Posterior cingulate gyrus (tissue), 11 donors: ENCODE measurements at regions of chr20 and their contacts with region 1.

Region 1: DNA sequence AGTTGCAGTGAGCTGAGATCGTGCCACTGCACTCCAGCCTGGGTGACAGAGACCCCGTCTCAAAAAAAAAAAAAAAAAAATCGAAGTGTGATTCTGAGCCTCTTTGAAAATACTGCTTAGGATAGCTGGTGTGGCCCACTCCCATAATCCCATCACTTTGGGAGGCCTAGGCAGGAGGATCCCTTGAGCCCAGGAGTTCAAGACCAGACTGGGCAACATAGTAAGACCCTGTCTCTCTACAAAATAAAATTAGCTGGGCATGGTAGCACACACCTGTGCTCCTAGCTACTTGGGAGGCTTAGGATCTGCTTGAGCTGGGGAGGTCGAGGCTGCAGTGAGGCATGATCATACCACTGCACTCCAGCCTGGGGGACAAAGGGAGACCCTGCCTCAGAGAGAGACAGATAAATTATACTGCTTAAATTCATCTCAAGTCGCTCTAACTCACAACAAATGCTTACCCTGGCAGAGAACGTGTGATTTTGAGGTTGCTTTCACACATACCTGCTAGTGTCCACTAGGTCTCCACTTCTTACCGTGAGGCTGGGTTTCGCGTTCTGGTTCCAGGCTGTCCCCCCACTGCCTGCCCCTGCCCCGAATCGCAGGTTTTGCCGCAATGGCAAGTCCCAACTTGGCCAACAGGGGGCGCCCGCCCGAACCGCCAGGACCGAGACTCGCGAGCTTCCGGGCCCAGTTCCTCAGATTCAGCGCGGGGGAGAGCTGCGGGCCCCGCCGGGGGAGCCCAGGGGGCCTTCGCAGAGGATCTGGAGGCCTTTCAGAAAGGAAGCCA is 12.3 kb upstream of the TMC2 start:
- DNase-seq: peak; percentile 82 to 98 (median 93)

Region 2: DNA sequence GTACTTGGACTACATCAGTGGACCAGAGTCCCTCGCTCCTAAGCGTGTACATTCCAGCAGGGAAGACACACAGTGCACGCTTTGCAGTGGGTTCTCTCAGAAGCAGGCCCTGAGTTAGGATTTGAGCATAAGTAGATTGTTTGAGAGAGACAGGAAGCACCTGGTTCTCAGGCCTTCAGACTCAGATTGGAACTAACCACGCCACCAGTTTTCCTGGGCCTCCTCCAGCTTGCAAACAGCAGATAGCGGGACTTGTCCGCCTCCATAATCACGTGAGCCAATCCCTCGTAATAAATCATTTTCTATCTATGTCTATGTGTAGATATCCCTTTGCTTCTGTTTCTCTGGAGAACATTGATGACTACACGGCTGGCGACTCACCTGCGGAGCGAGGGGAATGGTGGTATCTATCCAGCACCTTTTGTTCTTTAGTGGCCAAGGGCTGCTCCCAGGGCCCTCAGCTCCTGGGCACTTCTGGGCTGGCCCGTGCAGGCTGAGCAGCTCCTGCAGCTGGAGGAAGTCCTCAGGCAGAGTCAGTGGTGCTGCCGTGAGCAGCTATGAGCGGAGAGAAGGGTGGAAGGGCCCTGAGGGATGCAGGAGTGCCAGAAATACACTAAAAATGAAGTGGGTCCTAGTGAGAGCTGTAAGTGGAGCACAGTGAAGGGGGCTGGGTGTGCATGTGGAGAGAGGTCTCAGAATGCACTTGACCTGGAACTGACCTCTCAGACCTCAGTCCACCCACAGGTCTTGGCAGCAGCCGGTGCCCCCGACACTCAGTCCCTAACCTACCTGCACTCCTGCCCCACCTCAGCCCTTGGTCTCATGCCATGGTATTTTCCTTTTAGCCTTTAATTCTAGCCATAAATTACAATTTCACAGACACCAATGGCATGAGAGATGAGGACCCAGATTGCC is 345.5 kb before region 1 on chr20:
- intact Hi-C with region 1: no loop called
- DNase-seq: no peak

Region 3: DNA sequence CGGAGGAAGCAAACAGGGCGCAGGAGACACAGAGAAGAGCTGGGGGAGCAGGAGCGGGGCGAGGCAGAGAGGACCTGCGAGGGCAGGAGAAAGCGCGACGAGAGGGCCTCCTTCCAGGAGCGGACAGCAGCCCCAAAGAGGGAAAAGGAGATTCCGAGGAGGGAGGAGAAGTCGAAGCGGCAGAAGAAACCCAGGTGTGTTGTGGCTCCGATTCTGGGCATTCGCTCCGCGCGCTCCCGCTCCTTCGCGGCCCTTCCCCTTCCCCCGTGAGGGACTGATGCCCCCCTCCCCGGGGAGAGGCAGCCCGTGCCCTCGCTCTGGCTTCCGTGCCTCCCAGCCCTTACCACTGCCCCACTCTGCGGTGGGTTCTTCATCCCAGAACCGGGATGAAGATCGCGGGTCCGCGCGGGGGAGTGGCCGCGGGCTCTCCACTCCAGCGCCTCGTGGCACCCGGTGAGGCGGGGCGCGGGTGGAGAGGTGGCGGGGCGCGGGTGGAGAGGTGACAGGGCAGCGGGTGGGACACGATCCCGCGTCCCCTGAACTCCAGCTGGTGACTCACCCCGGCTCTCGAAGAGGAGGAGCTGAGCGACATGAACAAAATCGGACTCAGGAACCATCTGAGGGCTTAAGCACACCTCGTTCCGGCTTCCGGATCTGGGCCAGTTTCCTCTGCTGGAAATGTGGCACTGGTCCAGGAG is 34.6 kb after region 1 on chr20:
- intact Hi-C with region 1: loop called (anchors 5 kb)
- DNase-seq: peak in 1 of 10 donors; percentile 17

Region 4: DNA sequence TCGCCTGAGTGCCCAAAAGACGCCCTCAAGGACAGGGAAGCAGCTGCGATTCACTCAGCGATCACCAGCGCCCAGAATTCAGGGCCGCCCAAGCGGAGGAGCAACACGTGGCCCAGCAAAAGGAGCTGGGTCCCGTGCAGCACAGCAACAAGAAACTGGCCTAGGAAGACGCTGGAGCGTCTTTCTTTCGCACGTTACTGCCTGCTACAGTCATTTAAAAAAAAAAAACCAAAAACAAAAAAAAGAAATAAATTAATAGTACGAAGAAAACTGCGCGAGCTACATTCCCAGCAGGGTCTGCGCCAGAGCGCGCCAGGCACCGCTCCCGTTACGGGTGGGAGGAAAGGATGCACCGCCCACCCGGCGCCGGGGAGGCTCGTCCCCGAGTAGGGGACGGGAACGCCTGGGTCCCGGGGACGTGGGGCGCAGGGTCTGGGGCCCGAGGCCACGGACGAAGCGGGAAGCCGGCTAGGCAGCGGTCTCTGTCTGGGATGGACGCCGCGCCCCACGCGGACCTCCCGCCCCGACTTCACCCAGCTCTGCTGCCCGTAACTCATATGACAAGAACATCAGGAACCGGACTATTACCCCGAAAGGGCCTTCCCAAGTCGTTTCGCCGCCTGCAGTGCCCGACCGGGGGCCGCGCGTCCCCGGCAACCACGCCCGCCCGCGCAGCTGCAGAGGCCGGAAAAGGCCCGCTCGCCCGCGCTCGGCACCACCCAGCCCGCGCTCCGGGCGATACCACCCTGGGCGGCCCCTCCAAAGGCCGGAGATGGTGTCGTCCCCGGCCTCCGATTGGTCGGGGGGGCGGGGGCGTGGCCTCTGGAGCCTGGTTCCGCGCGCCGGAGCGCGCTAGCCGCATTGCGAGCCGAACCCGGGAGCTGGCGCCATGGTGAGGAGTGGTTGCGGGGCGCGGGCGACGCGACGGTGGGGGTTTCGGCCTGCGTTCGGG is 127.9 kb after region 1 on chr20 and contains the start of gene NOP56:
- intact Hi-C with region 1: loop called (anchors 2 kb)
- DNase-seq: peak; percentile 87 to 99 (median 92)